Activated naive CD4-positive, alpha-beta T cell treated with anti-CD3 and anti-CD28 coated beads for 36 hours (primary cell): ENCODE measurements at regions of chr2 and their contacts with region 1.

Region 1: GRCh38 chr2:202831242-202832220 is 40.0 kb downstream of the ICA1L start:
- DNase-seq: peak; percentile 80
- H3K4me3 Mint-ChIP-seq: no peak overlapping the region
- H3K27ac Mint-ChIP-seq: no peak overlapping the region
- H3K4me1 Mint-ChIP-seq: peaks cover 10% of the 10 kb centered on the region
- H3K27me3 Mint-ChIP-seq: no peaks in the 10 kb centered on the region

Region 2: DNA sequence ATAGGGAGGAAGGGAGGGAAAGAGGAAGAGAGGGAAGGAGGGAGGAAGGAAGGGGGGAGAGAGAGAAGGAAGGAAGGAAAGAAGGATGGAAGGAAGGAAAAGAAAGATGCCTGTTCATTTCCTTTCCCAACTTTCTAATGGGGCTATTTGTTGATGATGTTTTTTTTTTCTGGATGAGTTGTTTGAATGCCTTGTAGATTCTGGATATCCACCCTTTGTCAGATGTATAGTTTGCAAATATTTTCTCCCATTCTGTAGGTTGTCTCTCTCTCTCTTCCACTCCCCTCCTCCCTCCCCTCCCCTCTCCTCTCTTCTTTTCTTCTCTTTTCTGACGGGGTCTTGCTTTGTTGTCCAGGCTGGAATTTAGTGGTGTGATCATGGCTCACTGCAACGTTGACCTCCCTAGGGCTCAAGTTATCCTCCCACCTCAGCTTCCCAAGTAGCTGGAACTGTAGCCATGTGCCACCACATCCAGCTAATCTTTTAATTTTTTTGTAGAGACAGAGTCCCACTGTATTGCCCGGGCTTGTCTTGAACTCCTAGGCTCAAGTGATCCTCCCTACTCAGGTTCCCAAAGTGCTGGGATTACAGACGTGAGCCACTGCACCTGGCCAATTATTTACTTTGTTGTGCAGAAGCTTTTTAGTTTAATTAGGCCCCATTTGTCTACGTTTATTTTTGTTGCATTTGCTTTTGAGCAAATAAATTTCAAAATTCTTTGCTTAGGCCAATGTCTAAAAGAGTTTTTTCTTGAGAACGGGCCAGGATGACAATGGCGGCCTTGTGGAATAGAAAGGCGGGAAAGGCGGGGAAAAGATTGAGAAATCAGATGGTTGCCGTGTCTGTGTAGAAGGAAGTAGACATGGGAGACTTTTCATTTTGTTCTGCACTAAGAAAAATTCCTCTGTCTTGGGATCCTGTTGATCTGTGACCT is 254.0 kb before region 1 on chr2:
- CTCF ChIA-PET with region 1: interaction called, 4 read pairs
- intact Hi-C with region 1: loop called (anchors 5 kb)
- DNase-seq: no peak
- H3K4me3 Mint-ChIP-seq: no peak overlapping the region
- H3K27ac Mint-ChIP-seq: no peak overlapping the region
- H3K4me1 Mint-ChIP-seq: peaks cover 2% of the 10 kb centered on the region
- H3K27me3 Mint-ChIP-seq: no peaks in the 10 kb centered on the region

Region 3: DNA sequence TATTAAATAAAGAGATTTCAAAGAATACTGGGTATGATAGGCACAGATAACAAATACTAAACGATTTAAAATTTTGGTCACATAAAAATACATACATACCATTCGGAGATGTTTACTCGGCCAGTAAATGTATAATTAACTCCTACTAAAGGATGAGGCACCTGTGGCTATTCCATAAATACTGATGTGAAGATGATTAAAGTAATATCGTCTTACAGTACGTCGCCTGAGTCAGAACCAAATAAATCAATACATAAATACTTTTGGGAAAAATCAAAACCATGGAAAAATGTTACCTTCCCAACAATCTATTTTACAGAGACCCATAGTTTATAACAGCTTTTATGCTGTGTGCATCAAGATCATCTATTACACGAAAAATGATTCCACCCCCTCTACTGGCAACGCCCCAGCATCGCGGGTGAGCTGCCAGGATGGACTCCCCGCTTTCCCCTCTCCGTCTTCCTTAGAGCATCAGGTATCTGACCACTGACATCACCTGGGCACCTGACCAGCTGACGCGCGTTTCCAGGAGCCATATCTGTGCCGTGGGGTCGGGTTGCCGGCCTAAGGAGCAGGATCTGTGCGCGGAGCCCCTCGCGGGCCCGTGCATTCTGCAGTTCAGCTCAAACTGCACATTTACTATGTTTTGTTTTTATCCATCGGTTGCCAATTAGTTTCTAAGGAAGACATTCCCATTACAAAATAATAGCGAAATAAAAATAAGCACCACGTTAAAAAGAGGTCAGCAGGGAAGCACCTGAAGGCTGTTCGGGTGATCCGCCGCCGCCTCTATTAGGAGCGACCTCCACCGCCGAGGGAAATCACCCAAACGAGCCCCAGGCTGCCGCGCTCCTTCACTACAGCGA is 39.1 kb after region 1 on chr2:
- CTCF ChIA-PET with region 1: interaction called, 3 read pairs
- intact Hi-C with region 1: loop called (anchors 1 kb)
- DNase-seq: peak; percentile 85
- H3K4me3 Mint-ChIP-seq: peak overlapping the region; percentile 88
- H3K27ac Mint-ChIP-seq: peak overlapping the region; percentile 72
- H3K4me1 Mint-ChIP-seq: peaks cover 7% of the 10 kb centered on the region
- H3K27me3 Mint-ChIP-seq: no peaks in the 10 kb centered on the region

Region 4: DNA sequence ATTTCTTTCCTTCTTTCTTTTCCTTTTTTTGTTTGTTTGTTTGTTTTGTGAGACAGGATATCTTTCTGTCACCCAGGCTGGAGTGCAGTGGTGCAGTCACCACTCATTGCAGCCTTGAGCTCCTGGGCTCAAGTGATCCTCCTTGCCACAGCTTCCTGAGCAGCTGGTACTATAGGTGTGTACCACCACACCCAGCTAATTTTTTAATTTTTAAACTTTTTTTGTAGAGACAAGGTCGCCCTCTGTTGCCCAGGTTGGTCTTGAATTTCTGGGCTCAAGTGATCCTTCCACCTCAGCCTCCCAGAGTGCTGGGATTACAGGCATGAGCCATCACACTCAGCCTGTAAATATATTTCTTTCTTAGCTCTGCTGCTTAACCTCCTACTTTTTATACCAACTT is 323.9 kb after region 1 on chr2:
- CTCF ChIA-PET with region 1: no interaction called
- intact Hi-C with region 1: loop called (anchors 1 kb)
- DNase-seq: peak; percentile 29
- H3K4me3 Mint-ChIP-seq: no peak overlapping the region
- H3K27ac Mint-ChIP-seq: no peak overlapping the region
- H3K4me1 Mint-ChIP-seq: peaks cover 2% of the 10 kb centered on the region
- H3K27me3 Mint-ChIP-seq: no peaks in the 10 kb centered on the region

Region 5: DNA sequence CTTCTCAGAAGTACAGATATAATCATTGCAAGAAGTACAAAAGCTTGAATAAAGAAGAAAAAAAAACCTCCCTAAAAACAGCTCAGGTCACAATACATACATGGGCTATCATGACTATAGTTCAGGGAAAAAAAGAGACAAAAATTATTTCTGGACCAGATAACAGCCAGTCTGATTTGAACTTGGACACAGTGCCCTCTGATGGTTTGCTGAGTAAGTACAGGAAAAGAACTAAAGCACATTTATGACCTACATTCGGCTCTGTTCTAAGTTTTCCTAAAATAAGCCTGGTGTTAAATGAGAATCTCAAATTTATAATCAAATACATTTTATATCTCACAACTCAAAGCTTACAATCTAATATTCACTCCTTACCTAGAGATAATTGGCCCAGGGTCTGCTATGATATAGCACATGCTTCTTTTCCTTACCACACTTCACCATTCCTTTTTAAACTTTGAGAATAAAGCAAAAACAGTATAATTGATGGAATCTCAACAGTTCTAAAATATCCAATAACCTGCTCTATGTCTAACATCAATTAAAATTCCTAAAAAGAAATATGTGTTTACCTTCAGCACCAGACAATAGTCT is 622.4 kb after region 1 on chr2:
- CTCF ChIA-PET with region 1: no interaction called
- intact Hi-C with region 1: loop called (anchors 2 kb)
- DNase-seq: peak; percentile 54
- H3K4me3 Mint-ChIP-seq: no peak overlapping the region
- H3K27ac Mint-ChIP-seq: no peak overlapping the region
- H3K4me1 Mint-ChIP-seq: peaks cover 2% of the 10 kb centered on the region
- H3K27me3 Mint-ChIP-seq: no peaks in the 10 kb centered on the region

Region 6: GRCh38 chr2:203650860-203651613 is 819.5 kb after region 1 on chr2:
- CTCF ChIA-PET with region 1: no interaction called
- intact Hi-C with region 1: loop called (anchors 1 kb)
- DNase-seq: peak; percentile 26
- H3K4me3 Mint-ChIP-seq: no peak overlapping the region
- H3K27ac Mint-ChIP-seq: no peak overlapping the region
- H3K4me1 Mint-ChIP-seq: peaks cover 25% of the 10 kb centered on the region
- H3K27me3 Mint-ChIP-seq: no peaks in the 10 kb centered on the region